Right lobe of liver (tissue), 6 donors: ENCODE measurements at regions of chr16 and their contacts with region 1.

Region 1: DNA sequence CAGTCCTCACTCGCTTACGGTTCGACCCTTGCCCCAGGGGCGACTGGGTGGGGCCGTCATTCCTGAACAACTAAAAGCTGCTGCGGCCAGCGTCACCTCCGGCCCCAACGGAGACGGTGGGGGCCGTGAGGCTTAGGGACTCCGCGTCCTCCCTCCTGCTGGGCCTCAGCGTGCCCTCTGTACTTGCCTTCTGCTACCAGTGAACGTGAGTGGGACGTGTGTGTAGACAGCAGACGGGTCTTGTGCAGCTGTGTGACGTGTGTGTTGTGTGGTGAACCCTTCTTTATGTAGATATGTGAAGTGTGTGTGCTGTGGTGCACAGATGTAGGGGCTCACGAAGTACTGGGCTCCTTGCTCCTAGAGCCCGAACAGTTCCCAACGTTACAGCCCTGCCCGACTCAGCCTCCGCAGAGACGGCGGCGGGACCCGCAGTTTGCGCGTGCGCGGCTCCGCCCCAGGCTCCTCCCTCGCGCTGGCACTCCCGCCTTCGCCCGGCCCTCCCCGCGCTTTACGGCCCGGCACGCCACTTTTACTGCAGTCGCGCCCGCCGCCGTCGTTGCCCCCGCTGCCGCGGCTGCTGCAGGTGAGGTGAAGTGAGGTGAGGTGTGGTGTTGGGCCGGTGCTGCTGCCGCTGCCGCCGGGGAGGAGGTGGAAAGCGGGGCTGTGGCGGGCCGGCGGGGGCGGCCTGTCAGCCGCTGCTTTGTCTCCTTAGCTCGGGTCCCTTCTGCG is at the start of gene PHAF1:
- DNase-seq: peak; percentile 96 to 97 (median 97)
- ATAC-seq: peak; percentile 79 to 89 (median 84)
- H3K4me3 ChIP-seq: peak within 1 kb of the TSS; percentile 97 to 99 (median 99)
- H3K27ac ChIP-seq: peak within 1 kb of the TSS; percentile 82
- H3K4me1 ChIP-seq: peaks cover 0 to 37% (median 5%) of the 10 kb centered on the region in 4 donors
- H3K27me3 ChIP-seq: no peaks in the 10 kb centered on the region
- CTCF ChIP-seq: no peak
- POLR2A ChIP-seq: peak; percentile 68
- total RNA-seq, gene PHAF1: 22.3 to 45.1 (median 32.4) TPM

Region 2: GRCh38 chr16:67000384-67001351 is 108.9 kb before region 1 on chr16:
- intact Hi-C with region 1: no loop called
- DNase-seq: peak; percentile 50 to 68 (median 62)
- ATAC-seq: peak in 3 of 4 donors; percentile 19 to 41 (median 39)
- H3K4me3 ChIP-seq: peak overlapping the region; percentile 29 to 57 (median 48)
- H3K27ac ChIP-seq: no peak overlapping the region
- H3K4me1 ChIP-seq: peaks cover 0 to 18% (median 9%) of the 10 kb centered on the region in 4 donors
- H3K27me3 ChIP-seq: no peaks in the 10 kb centered on the region
- CTCF ChIP-seq: no peak
- POLR2A ChIP-seq: no peak

Region 3: GRCh38 chr16:67028555-67029248 is 80.9 kb before region 1 on chr16 and contains the start of gene CBFB:
- intact Hi-C with region 1: loop called in 1 of 2 experiments (anchors 10 kb)
- DNase-seq: peak; percentile 94 to 95 (median 95)
- ATAC-seq: peak; percentile 93 to 95 (median 94)
- H3K4me3 ChIP-seq: peak within 1 kb of the TSS; percentile 82 to 89 (median 89)
- H3K27ac ChIP-seq: peak within 1 kb of the TSS; percentile 92 to 95 (median 94)
- H3K4me1 ChIP-seq: peaks cover 0 to 15% (median 6%) of the 10 kb centered on the region in 4 donors
- H3K27me3 ChIP-seq: no peaks in the 10 kb centered on the region
- CTCF ChIP-seq: peak in 1 of 4 donors; percentile 18
- POLR2A ChIP-seq: peak; percentile 77
- total RNA-seq, gene CBFB: 7.9 to 23.3 (median 18.9) TPM